Ascending aorta (tissue), 2 donors: ENCODE measurements at regions of chr3 and their contacts with region 1.

Region 1: GRCh38 chr3:66418475-66418931 is 82.3 kb downstream of the LRIG1 start:
- DNase-seq: peak in 1 of 2 donors; percentile 87
- H3K4me3 ChIP-seq: peak overlapping the region in 1 of 2 donors; percentile 34
- H3K27ac ChIP-seq: peak overlapping the region; percentile 74 to 75
- H3K4me1 ChIP-seq: peaks cover 0 to 34% of the 10 kb centered on the region in 2 donors
- H3K27me3 ChIP-seq: no peaks in the 10 kb centered on the region
- CTCF ChIP-seq: peak; percentile 26 to 53 (median 36)

Region 2: GRCh38 chr3:66450390-66451022 is 32.0 kb after region 1 on chr3:
- intact Hi-C with region 1: loop called (anchors 2 kb)
- DNase-seq: peak in 1 of 2 donors; percentile 80
- H3K4me3 ChIP-seq: peak overlapping the region in 1 of 2 donors; percentile 23
- H3K27ac ChIP-seq: peak overlapping the region; percentile 79 to 84
- H3K4me1 ChIP-seq: peaks cover 39 to 67% of the 10 kb centered on the region in 2 donors
- H3K27me3 ChIP-seq: no peaks in the 10 kb centered on the region
- CTCF ChIP-seq: no peak

Region 3: GRCh38 chr3:66593964-66594363 is 175.5 kb after region 1 on chr3:
- intact Hi-C with region 1: loop called (anchors 5 kb)
- DNase-seq: no peak
- H3K4me3 ChIP-seq: no peak overlapping the region
- H3K27ac ChIP-seq: no peak overlapping the region
- H3K4me1 ChIP-seq: peaks cover 0 to 2% of the 10 kb centered on the region in 2 donors
- H3K27me3 ChIP-seq: no peaks in the 10 kb centered on the region
- CTCF ChIP-seq: no peak